Activated CD8-positive, alpha-beta T cell treated with anti-CD3 and anti-CD28 coated beads for 36 hours (primary cell): ENCODE measurements at regions of chr3 and their contacts with region 1.

Region 1: DNA sequence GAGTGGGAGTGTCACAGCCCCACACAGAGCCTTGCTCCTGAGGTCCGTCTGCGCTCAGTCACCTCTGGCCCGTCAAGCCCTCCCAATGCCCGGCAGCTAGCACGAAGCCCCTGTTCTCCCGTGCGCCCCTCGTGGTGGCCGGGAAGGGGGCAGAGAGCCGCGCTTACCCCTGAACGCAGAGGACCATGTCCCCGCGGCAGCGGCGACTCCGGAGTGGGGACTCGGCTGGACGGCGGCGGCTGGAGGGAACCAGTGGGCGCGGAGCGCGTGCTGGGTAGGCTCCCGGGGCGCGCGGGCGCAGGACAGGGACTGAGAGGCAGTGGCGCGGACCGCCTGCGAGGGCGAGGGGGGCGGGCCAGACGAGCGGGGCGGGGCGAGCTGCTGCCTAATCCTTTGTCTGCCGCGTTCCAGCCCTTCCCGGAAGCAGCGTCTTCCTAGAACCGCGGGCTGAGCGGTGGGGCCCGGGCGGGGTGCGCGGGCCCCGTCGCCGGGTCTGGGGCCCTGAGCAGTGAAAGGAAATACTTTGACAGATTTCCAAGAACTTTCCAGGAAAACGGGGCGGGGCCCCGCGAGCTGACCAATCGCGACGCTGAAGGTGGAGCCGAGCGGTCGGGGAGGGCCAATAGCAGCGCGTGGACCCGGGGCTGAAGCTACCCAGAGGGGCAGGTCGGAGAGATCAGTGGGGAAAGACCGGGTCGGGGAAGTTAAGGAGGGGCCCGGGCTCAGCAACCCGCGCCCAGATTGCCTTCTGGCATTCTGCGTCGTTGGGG is at the start of gene CISH:
- DNase-seq: peak; percentile 99
- ATAC-seq: peak; percentile 63
- H3K4me3 Mint-ChIP-seq: peak within 1 kb of the TSS; percentile 94
- H3K27ac Mint-ChIP-seq: peak within 1 kb of the TSS; percentile 100
- H3K4me1 Mint-ChIP-seq: peaks cover 18% of the 10 kb centered on the region
- H3K27me3 Mint-ChIP-seq: no peaks in the 10 kb centered on the region
- CTCF ChIP-seq: peak; percentile 25
- total RNA-seq, gene CISH: 307 to 308 TPM

Region 2: DNA sequence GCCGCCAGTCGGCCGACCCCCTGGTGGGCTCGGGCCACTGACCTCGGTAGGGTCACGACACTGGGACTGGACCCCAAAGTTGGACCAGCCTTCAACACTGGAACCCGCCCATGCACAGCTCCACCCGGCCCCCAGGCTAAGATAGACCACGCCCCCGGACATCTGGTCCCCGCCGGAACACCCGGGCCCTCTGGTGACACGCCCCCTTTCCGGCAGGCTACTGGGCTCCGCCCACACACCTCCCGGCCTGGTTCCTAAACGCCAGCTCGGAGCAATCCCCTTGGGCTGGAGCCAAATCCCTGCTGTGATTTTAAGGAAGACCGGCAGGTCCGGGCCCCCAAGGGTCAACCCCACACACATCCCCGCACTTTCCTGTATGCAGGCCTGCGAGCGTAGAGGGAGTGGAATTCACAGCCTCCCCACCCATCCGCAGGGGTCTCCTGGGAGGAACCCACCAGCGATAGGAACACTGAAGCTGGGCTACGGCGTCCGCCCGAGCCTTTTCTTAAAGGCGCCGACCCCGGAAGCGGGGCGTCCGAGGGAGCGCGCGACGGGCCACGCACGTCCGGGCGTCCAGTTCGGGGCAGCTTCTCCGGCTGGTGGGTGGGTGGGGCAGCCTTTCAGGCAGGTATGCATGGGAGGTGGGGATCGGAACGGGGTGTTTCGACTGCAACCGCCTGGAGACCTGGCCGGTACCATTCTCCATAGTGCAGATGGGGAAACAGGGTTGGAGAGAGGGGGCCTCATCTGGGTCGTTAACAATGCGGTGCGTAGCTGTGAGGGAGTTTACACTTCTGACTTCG is 42.5 kb before region 1 on chr3 and contains the start of gene HEMK1:
- CTCF ChIA-PET with region 1: interaction called, 769 read pairs
- POLR2A ChIA-PET with region 1: interaction called, 2,276 read pairs
- intact Hi-C with region 1: loop called (anchors 2 kb)
- DNase-seq: peak; percentile 99
- ATAC-seq: peak; percentile 38
- H3K4me3 Mint-ChIP-seq: peak within 1 kb of the TSS; percentile 91
- H3K27ac Mint-ChIP-seq: peak within 1 kb of the TSS; percentile 98
- H3K4me1 Mint-ChIP-seq: peaks cover 47% of the 10 kb centered on the region
- H3K27me3 Mint-ChIP-seq: peaks cover 2% of the 10 kb centered on the region
- CTCF ChIP-seq: no peak
- total RNA-seq, gene HEMK1: 97.1 to 101 TPM

Region 3: GRCh38 chr3:50600841-50601591 is 10.6 kb before region 1 on chr3:
- CTCF ChIA-PET with region 1: interaction called, 78 read pairs
- POLR2A ChIA-PET with region 1: interaction called, 1,836 read pairs
- intact Hi-C with region 1: no loop called
- DNase-seq: peak; percentile 98
- ATAC-seq: peak; percentile 59
- H3K4me3 Mint-ChIP-seq: peak overlapping the region; percentile 94
- H3K27ac Mint-ChIP-seq: peak overlapping the region; percentile 100
- H3K4me1 Mint-ChIP-seq: peaks cover 78% of the 10 kb centered on the region
- H3K27me3 Mint-ChIP-seq: no peaks in the 10 kb centered on the region
- CTCF ChIP-seq: no peak

Region 4: GRCh38 chr3:50633230-50633835 is 21.7 kb after region 1 on chr3:
- CTCF ChIA-PET with region 1: interaction called, 67 read pairs
- POLR2A ChIA-PET with region 1: interaction called, 30 read pairs
- intact Hi-C with region 1: no loop called
- DNase-seq: no peak
- ATAC-seq: no peak
- H3K4me3 Mint-ChIP-seq: no peak overlapping the region
- H3K27ac Mint-ChIP-seq: peak overlapping the region; percentile 78
- H3K4me1 Mint-ChIP-seq: peaks cover 89% of the 10 kb centered on the region
- H3K27me3 Mint-ChIP-seq: no peaks in the 10 kb centered on the region
- CTCF ChIP-seq: no peak

Region 5: GRCh38 chr3:50652709-50653108 is 41.1 kb after region 1 on chr3:
- CTCF ChIA-PET with region 1: interaction called, 193 read pairs
- POLR2A ChIA-PET with region 1: interaction called, 53 read pairs
- intact Hi-C with region 1: loop called (anchors 5 kb)
- DNase-seq: peak; percentile 74
- ATAC-seq: peak; percentile 56
- H3K4me3 Mint-ChIP-seq: no peak overlapping the region
- H3K27ac Mint-ChIP-seq: peak overlapping the region; percentile 26
- H3K4me1 Mint-ChIP-seq: peaks cover 25% of the 10 kb centered on the region
- H3K27me3 Mint-ChIP-seq: no peaks in the 10 kb centered on the region
- CTCF ChIP-seq: peak; percentile 73

Region 6: DNA sequence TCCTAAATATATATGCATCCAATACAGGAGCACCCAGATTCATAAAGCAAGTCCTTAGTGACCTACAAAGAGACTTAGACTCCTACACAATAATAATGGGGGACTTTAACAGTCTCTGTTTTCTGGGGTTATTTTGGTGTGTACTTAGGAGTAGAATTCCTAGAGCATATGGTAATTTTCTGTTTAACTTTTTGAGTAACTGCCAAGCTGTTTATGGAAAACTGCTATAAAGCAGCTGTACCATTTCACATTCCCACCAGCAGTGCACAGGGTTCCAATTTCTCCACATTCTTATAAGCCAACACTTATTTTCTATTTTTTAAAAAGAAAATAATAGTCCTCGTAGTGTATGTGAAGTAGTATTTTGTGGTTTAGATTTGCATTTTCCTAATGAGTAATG is 132.0 kb after region 1 on chr3:
- CTCF ChIA-PET with region 1: no interaction called
- POLR2A ChIA-PET with region 1: no interaction called
- intact Hi-C with region 1: no loop called
- DNase-seq: no peak
- ATAC-seq: no peak
- H3K4me3 Mint-ChIP-seq: no peak overlapping the region
- H3K27ac Mint-ChIP-seq: no peak overlapping the region
- H3K4me1 Mint-ChIP-seq: peaks cover 6% of the 10 kb centered on the region
- H3K27me3 Mint-ChIP-seq: no peaks in the 10 kb centered on the region
- CTCF ChIP-seq: no peak

Region 7: DNA sequence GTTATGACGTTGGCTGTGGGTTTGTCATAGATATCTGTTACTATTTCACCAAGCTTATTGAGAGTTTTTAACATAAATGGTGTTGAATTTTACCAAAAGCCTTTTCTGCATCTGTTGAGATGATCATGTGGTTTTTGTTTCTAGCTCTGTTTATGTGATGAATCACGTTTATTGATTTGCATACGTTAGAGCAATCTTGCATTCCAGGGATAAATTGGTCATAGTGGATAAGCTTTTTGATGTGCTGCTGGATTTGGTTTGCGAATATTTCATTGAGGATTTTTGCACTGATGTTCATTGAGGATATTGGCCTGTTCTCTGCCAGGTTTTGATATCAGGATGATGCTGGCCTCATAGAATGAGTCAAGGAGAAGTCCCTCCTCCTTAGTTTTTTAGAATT is 180.9 kb after region 1 on chr3:
- CTCF ChIA-PET with region 1: no interaction called
- POLR2A ChIA-PET with region 1: no interaction called
- intact Hi-C with region 1: no loop called
- DNase-seq: no peak
- ATAC-seq: no peak
- H3K4me3 Mint-ChIP-seq: no peak overlapping the region
- H3K27ac Mint-ChIP-seq: no peak overlapping the region
- H3K4me1 Mint-ChIP-seq: no peaks in the 10 kb centered on the region
- H3K27me3 Mint-ChIP-seq: peaks cover 7% of the 10 kb centered on the region
- CTCF ChIP-seq: no peak

Region 8: GRCh38 chr3:51371943-51372557 is 760.4 kb after region 1 on chr3:
- CTCF ChIA-PET with region 1: interaction called, 13 read pairs
- POLR2A ChIA-PET with region 1: interaction called, 3 read pairs
- intact Hi-C with region 1: no loop called
- DNase-seq: peak; percentile 77
- ATAC-seq: peak; percentile 47
- H3K4me3 Mint-ChIP-seq: no peak overlapping the region
- H3K27ac Mint-ChIP-seq: no peak overlapping the region
- H3K4me1 Mint-ChIP-seq: peaks cover 2% of the 10 kb centered on the region
- H3K27me3 Mint-ChIP-seq: no peaks in the 10 kb centered on the region
- CTCF ChIP-seq: peak; percentile 51

Region 9: GRCh38 chr3:51391075-51391567 is 779.5 kb after region 1 on chr3 and contains the start of gene RBM15B:
- CTCF ChIA-PET with region 1: interaction called, 20 read pairs
- POLR2A ChIA-PET with region 1: interaction called, 11 read pairs
- intact Hi-C with region 1: loop called (anchors 5 kb)
- DNase-seq: peak; percentile 98
- ATAC-seq: peak; percentile 96
- H3K4me3 Mint-ChIP-seq: peak within 1 kb of the TSS; percentile 83
- H3K27ac Mint-ChIP-seq: peak within 1 kb of the TSS; percentile 91
- H3K4me1 Mint-ChIP-seq: peaks cover 68% of the 10 kb centered on the region
- H3K27me3 Mint-ChIP-seq: no peaks in the 10 kb centered on the region
- CTCF ChIP-seq: peak; percentile 78
- total RNA-seq, gene RBM15B: 20.8 to 20.9 TPM